Posterior vena cava (tissue), 2 donors: ENCODE measurements at regions of chr12 and their contacts with region 1.

Region 1: GRCh38 chr12:67748743-67749040 is 100.1 kb downstream of the DYRK2 start:
- DNase-seq: no peak

Region 2: GRCh38 chr12:67727702-67728666 is 20.7 kb before region 1 on chr12:
- intact Hi-C with region 1: loop called in 1 of 2 experiments (anchors 1 kb)
- DNase-seq: no peak